Stomach (tissue), 19 donors: ENCODE measurements at regions of chr6 and their contacts with region 1.

Region 1: DNA sequence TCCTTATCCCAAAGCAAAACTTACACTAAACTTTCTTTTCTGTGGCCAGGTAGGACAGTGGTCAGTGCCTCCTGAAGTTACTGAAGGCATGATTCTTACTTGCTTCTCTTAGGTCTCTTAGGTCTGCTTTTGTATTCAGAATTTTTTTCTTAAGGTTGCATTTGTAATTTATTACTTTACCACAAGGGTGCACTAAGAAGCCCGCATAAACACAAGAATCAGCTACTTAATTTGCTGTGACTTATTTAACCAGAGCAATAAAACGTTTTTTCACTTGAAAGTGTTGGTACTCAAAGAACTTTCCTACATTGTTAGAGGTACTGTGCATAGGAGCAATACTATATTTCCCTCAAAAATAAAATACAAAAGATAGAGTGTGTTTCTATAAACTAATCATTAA is 75.4 kb upstream of the LAMA2 start:
- DNase-seq: peak in 1 of 2 donors; percentile 45
- H3K4me3 ChIP-seq: no peak overlapping the region
- H3K27ac ChIP-seq: no peak overlapping the region
- H3K4me1 ChIP-seq: no peaks in the 10 kb centered on the region
- H3K27me3 ChIP-seq: no peaks in the 10 kb centered on the region
- CTCF ChIP-seq: peak in 5 of 7 experiments; percentile 13 to 43 (median 32)
- EP300 ChIP-seq: no peak
- POLR2A ChIP-seq: no peak

Region 2: DNA sequence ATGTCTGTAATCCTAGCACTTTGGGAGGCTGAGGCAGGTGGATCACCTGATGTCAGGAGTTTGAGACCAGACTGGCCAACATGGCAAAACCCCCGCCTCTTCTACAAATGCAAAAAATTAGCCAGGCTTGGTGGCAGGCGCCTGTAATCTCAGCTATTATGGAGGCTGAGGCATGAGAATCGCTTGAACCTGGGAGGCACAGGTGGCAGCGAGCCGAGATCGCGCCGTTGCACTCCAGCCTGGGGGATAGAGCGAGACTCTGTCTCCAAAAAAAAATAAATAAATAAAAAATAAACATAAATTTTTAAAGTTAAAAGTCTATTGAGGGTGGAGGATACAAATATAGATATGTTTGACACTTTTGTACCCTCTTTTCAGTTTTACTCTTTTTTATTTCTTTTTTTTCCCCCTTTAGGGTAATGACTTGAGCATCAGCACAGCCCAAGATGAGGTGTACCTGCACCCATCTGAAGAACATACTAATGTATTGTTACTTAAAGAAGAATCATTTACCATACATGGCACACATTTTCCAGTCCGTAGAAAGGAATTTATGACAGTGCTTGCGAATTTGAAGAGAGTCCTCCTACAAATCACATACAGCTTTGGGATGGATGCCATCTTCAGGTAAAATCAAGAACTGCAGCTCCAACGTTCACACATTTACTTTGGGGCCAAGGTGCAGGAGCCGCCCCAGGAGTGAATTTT is 444.2 kb after region 1 on chr6:
- intact Hi-C with region 1: loop called (anchors 10 kb)
- DNase-seq: peak; percentile 44 to 82
- H3K4me3 ChIP-seq: no peak overlapping the region
- H3K27ac ChIP-seq: no peak overlapping the region
- H3K4me1 ChIP-seq: peaks cover 0 to 23% (median 3%) of the 10 kb centered on the region in 4 donors
- H3K27me3 ChIP-seq: no peaks in the 10 kb centered on the region
- CTCF ChIP-seq: peak in 5 of 7 experiments; percentile 51 to 87 (median 77)
- EP300 ChIP-seq: no peak
- POLR2A ChIP-seq: no peak

Region 3: DNA sequence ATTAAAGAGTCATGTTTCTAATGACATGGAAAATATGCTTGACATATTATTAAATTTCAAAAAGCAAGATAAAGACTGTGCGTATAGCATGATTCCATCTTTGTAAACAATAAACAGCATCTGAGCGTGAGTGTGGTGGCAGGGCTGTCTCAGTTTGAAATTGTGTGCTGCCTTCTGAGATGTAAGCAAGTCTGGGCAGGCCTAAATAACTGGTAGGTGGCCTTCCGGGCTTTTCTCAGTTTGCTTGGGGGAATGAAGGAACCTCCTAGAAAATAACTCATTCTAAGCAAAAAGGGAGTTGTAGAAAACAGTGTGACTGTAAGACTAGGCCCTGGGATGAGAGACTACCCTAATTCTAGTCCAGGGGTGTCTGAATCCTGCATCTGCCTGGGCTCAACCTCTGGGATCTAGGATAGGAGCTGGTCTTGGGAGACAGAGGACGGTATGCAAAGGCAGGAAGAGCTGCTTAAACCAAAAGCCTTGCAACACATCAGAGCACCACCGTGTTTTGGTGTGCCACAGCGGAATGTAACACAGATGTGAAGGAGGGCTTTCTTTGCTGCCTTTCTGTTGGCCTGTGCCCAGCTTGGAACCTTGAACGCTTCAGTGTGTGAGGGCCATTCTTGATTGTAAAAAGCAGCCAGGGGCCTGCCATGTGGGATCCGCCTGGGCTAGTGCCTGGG is 1147.3 kb after region 1 on chr6:
- intact Hi-C with region 1: no loop called
- DNase-seq: no peak
- H3K4me3 ChIP-seq: no peak overlapping the region
- H3K27ac ChIP-seq: no peak overlapping the region
- H3K4me1 ChIP-seq: no peaks in the 10 kb centered on the region
- H3K27me3 ChIP-seq: no peaks in the 10 kb centered on the region
- CTCF ChIP-seq: no peak
- EP300 ChIP-seq: no peak
- POLR2A ChIP-seq: no peak